Gastrocnemius medialis (tissue), 4 donors: ENCODE measurements at regions of chr4 and their contacts with region 1.

Region 1: GRCh38 chr4:16264798-16265197 is 38.5 kb upstream of the TAPT1 start:
- DNase-seq: no peak
- ATAC-seq: peak; percentile 80 to 82
- H3K4me3 ChIP-seq: no peak overlapping the region
- H3K27ac ChIP-seq: no peak overlapping the region
- H3K4me1 ChIP-seq: peaks cover 0 to 7% of the 10 kb centered on the region in 2 donors
- H3K27me3 ChIP-seq: no peaks in the 10 kb centered on the region
- CTCF ChIP-seq: peak; percentile 30 to 70 (median 67)
- POLR2A ChIP-seq: no peak

Region 2: GRCh38 chr4:15882675-15883086 is 382.1 kb before region 1 on chr4:
- in situ Hi-C with region 1: no loop called
- intact Hi-C with region 1: loop called (anchors 5 kb)
- DNase-seq: peak; percentile 9 to 35
- ATAC-seq: peak; percentile 87 to 97
- H3K4me3 ChIP-seq: no peak overlapping the region
- H3K27ac ChIP-seq: no peak overlapping the region
- H3K4me1 ChIP-seq: no peaks in the 10 kb centered on the region
- H3K27me3 ChIP-seq: no peaks in the 10 kb centered on the region
- CTCF ChIP-seq: peak; percentile 72 to 84 (median 77)
- POLR2A ChIP-seq: no peak

Region 3: GRCh38 chr4:16034010-16034829 is 230.6 kb before region 1 on chr4:
- in situ Hi-C with region 1: loop called (anchors 5 kb)
- intact Hi-C with region 1: no loop called
- DNase-seq: no peak
- ATAC-seq: no peak
- H3K4me3 ChIP-seq: no peak overlapping the region
- H3K27ac ChIP-seq: no peak overlapping the region
- H3K4me1 ChIP-seq: peaks cover 0 to under 1% of the 10 kb centered on the region in 2 donors
- H3K27me3 ChIP-seq: no peaks in the 10 kb centered on the region
- CTCF ChIP-seq: no peak
- POLR2A ChIP-seq: no peak

Region 4: GRCh38 chr4:16196478-16197393 is 68.1 kb before region 1 on chr4:
- in situ Hi-C with region 1: loop called in 2 of 4 experiments (anchors 5 to 10 kb)
- intact Hi-C with region 1: loop called (anchors 2 kb)
- DNase-seq: no peak
- ATAC-seq: peak; percentile 80 to 90
- H3K4me3 ChIP-seq: peak overlapping the region in 1 of 4 donors; percentile 19
- H3K27ac ChIP-seq: peak overlapping the region in 3 of 4 donors; percentile 12 to 44 (median 33)
- H3K4me1 ChIP-seq: peaks cover 40 to 48% of the 10 kb centered on the region in 2 donors
- H3K27me3 ChIP-seq: no peaks in the 10 kb centered on the region
- CTCF ChIP-seq: peak in 3 of 5 experiments; percentile 19 to 35 (median 32)
- POLR2A ChIP-seq: no peak